ENCODE measurements at regions of chr1 and their contacts with region 1.

Region 1: GRCh38 chr1:155084722-155085503 is 6.3 kb downstream of the EFNA3 start:
- DNase-seq: peak; percentile 72
- ATAC-seq: peak; percentile 90
- H3K4me3 ChIP-seq: peak overlapping the region; percentile 72
- H3K27ac ChIP-seq: peak overlapping the region; percentile 72
- H3K4me1 ChIP-seq: peaks cover 33% of the 10 kb centered on the region
- H3K27me3 ChIP-seq: peaks cover 17 to 23% of the 10 kb centered on the region in 2 experiments
- CTCF ChIP-seq: peak; percentile 90 to 99 (median 95)
- EP300 ChIP-seq: 0 out of 4 replicates have a peak, but pooled peaks of 1 of the 2 experiments have one; percentile 48
- POLR2A ChIP-seq: no peak; the same call in 1 of the 2 replicates
- RAD21 ChIP-seq: peak; percentile 99

Region 2: DNA sequence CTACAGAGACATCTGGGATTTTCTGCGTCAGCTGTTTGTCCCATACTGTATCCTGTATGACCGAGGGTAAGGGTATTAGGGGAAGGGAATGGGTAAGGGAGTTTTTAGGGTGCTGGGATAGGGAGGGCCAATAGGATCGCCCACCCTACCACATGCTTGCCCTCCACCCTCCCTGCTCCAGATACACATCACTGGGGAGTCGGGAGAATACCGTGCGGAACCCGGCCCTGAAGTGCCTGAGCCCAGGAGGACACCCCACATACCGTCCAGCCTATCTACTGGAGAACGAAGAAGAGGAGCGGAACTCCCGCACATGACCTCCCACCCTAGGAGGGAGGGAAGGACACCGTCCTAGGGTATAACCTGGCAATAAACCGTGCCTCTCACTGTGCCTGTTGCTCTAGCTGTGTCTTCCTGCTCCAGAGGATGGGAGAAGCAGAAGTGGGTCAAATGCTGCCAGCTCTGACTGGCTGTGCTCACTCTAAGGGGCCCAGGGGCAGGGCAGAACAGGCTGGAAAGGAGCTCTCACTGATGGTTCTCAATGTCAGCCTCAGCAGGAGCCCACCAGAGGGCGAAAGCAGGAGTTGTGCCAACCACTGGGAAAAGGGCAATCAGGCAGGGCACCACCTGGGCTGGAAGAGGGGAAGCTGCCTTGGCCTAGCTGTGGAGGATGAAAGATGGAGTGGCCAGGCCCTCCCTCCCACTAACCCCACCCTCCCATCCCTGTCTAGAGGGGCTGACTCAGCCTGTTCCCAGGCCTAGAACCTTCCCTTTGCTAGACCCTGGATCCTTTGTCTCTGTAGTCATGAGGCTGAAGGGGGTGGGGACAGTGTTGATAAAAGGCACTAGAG is 92.0 kb before region 1 on chr1:
- CTCF ChIA-PET with region 1: no interaction called
- POLR2A ChIA-PET with region 1: no interaction called
- RAD21 ChIA-PET with region 1: no interaction called
- SMC1A ChIA-PET with region 1: no interaction called
- in situ Hi-C with region 1: no loop called
- intact Hi-C with region 1: no loop called
- DNase-seq: no peak
- ATAC-seq: peak; percentile 37; the same call in 2 of the 3 replicates
- H3K4me3 ChIP-seq: no peak overlapping the region
- H3K27ac ChIP-seq: no peak overlapping the region
- H3K4me1 ChIP-seq: peaks cover 9% of the 10 kb centered on the region
- H3K27me3 ChIP-seq: no peaks in the 10 kb centered on the region
- CTCF ChIP-seq: peak; percentile 8 to 30 (median 21); a peak in 3 of 6 replicates
- EP300 ChIP-seq: no peak
- POLR2A ChIP-seq: no peak; the same call in 1 of the 2 replicates
- RAD21 ChIP-seq: no peak

Region 3: GRCh38 chr1:155044812-155045690 is 39.9 kb before region 1 on chr1:
- CTCF ChIA-PET with region 1: interaction called, 30 read pairs
- POLR2A ChIA-PET with region 1: interaction called, 4 read pairs
- RAD21 ChIA-PET with region 1: interaction called, 16 read pairs
- SMC1A ChIA-PET with region 1: interaction called, 17 read pairs
- in situ Hi-C with region 1: no loop called
- intact Hi-C with region 1: loop called (anchors 1 kb)
- DNase-seq: no peak
- ATAC-seq: peak; percentile 98
- H3K4me3 ChIP-seq: no peak overlapping the region
- H3K27ac ChIP-seq: no peak overlapping the region
- H3K4me1 ChIP-seq: peaks cover under 1% of the 10 kb centered on the region; the same call in 1 of the 2 replicates
- H3K27me3 ChIP-seq: peaks cover 2 to 3% of the 10 kb centered on the region in 2 experiments; a peak in 2 of 4 replicates
- CTCF ChIP-seq: peak; percentile 76 to 87 (median 84)
- EP300 ChIP-seq: no peak
- POLR2A ChIP-seq: no peak
- RAD21 ChIP-seq: peak; percentile 71

Region 4: GRCh38 chr1:155050560-155051341 is 34.2 kb before region 1 on chr1 and contains the start of gene ADAM15:
- CTCF ChIA-PET with region 1: interaction called, 195 read pairs
- POLR2A ChIA-PET with region 1: interaction called, 4 read pairs
- RAD21 ChIA-PET with region 1: interaction called, 16 read pairs
- SMC1A ChIA-PET with region 1: interaction called, 17 read pairs
- in situ Hi-C with region 1: no loop called
- intact Hi-C with region 1: loop called (anchors 1 kb)
- DNase-seq: no peak
- ATAC-seq: peak; percentile 89
- H3K4me3 ChIP-seq: peak within 1 kb of the TSS; percentile 91
- H3K27ac ChIP-seq: peak within 1 kb of the TSS; percentile 15; the same call in 1 of the 2 replicates
- H3K4me1 ChIP-seq: peaks cover 13% of the 10 kb centered on the region
- H3K27me3 ChIP-seq: no peaks in the 10 kb centered on the region
- CTCF ChIP-seq: peak; percentile 91 to 92 (median 91)
- EP300 ChIP-seq: no peak
- POLR2A ChIP-seq: peak; percentile 51; the same call in 1 of the 2 replicates
- RAD21 ChIP-seq: peak; percentile 35; the same call in 1 of the 2 replicates
- polyA plus RNA-seq, gene ADAM15: 0.29 to 0.79 TPM

Region 5: GRCh38 chr1:155070721-155071569 is 14.0 kb before region 1 on chr1:
- CTCF ChIA-PET with region 1: interaction called, 195 read pairs
- POLR2A ChIA-PET with region 1: interaction called, 7 read pairs
- RAD21 ChIA-PET with region 1: interaction called, 63 read pairs
- SMC1A ChIA-PET with region 1: interaction called, 4 read pairs
- in situ Hi-C with region 1: no loop called
- intact Hi-C with region 1: no loop called
- DNase-seq: no peak
- ATAC-seq: peak; percentile 99
- H3K4me3 ChIP-seq: peak overlapping the region; percentile 18; the same call in 1 of the 2 replicates
- H3K27ac ChIP-seq: no peak overlapping the region
- H3K4me1 ChIP-seq: peaks cover 10% of the 10 kb centered on the region
- H3K27me3 ChIP-seq: no peaks in the 10 kb centered on the region
- CTCF ChIP-seq: peak; percentile 22 to 65 (median 32); a peak in 5 of 6 replicates
- EP300 ChIP-seq: no peak
- POLR2A ChIP-seq: no peak
- RAD21 ChIP-seq: no peak

Region 6: GRCh38 chr1:155392898-155393411 is 308.0 kb after region 1 on chr1:
- CTCF ChIA-PET with region 1: no interaction called
- POLR2A ChIA-PET with region 1: no interaction called
- RAD21 ChIA-PET with region 1: no interaction called
- SMC1A ChIA-PET with region 1: no interaction called
- in situ Hi-C with region 1: no loop called
- intact Hi-C with region 1: no loop called
- DNase-seq: no peak
- ATAC-seq: no peak
- H3K4me3 ChIP-seq: no peak overlapping the region
- H3K27ac ChIP-seq: no peak overlapping the region
- H3K4me1 ChIP-seq: no peaks in the 10 kb centered on the region
- H3K27me3 ChIP-seq: no peaks in the 10 kb centered on the region
- CTCF ChIP-seq: no peak
- EP300 ChIP-seq: no peak
- POLR2A ChIP-seq: no peak
- RAD21 ChIP-seq: no peak

Region 7: DNA sequence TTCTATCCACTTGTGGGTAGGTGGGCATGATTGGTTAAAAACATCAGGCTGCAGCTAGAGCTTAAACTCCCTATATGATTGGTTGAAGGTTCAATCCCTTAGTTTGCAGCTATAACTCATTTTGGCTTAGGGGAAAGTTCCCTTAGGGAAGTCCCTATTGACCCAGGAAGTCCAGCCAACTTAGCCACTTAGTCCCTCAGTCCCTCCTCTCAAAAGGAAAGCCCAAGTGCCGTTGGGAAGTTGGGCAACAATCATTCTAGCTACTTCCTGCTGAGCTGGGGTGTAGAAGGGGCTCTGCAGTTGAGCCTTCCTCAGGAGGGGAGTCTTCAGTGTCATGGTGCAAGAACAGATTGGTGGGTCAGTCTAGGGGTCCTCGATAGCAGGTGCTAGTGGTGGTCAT is 537.3 kb after region 1 on chr1:
- CTCF ChIA-PET with region 1: no interaction called
- POLR2A ChIA-PET with region 1: no interaction called
- RAD21 ChIA-PET with region 1: no interaction called
- SMC1A ChIA-PET with region 1: no interaction called
- in situ Hi-C with region 1: no loop called
- intact Hi-C with region 1: no loop called
- DNase-seq: no peak
- ATAC-seq: no peak
- H3K4me3 ChIP-seq: no peak overlapping the region
- H3K27ac ChIP-seq: no peak overlapping the region
- H3K4me1 ChIP-seq: no peaks in the 10 kb centered on the region
- H3K27me3 ChIP-seq: no peaks in the 10 kb centered on the region
- CTCF ChIP-seq: no peak
- EP300 ChIP-seq: no peak
- POLR2A ChIP-seq: no peak
- RAD21 ChIP-seq: no peak

Measured in GM12878 (cell line).